ENCODE measurements at regions of chr1 and their contacts with region 1.

Region 1: DNA sequence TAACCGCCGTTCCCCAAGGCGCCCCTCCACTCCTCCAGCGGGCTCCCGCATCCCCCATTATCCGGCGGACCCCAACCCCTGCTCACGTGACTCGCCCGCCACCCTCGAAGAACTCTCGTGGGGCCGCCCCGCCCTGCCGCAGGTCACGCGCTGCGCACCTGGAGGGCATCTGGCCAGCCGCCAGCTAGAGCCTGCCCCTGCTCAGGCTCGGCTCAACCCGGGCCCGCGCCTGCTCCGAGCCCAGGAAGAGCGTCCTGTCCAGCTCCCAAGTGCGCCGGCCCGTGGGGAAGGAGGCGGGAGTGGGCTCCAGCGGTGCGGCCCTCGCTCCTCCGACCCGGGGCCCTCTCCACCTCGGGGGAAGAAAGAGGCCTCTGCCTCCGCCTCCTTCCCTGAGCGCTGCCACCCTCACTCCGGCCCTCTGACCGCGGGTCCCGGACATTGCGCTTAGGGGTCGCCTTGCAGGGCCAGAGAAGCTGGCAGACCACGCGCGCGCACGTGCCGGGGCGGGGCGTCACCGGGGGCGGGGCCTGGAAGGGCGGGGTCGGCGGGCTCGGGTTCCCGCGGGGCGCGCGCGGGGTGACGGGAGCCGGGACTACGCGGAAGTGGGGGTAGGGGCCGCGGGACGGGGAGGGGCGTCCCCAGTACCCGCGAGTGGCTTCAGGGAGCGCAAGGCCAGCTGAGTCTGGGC is 28.4 kb downstream of the HMGN2 start:
- DNase-seq: peak; percentile 85

Region 2: DNA sequence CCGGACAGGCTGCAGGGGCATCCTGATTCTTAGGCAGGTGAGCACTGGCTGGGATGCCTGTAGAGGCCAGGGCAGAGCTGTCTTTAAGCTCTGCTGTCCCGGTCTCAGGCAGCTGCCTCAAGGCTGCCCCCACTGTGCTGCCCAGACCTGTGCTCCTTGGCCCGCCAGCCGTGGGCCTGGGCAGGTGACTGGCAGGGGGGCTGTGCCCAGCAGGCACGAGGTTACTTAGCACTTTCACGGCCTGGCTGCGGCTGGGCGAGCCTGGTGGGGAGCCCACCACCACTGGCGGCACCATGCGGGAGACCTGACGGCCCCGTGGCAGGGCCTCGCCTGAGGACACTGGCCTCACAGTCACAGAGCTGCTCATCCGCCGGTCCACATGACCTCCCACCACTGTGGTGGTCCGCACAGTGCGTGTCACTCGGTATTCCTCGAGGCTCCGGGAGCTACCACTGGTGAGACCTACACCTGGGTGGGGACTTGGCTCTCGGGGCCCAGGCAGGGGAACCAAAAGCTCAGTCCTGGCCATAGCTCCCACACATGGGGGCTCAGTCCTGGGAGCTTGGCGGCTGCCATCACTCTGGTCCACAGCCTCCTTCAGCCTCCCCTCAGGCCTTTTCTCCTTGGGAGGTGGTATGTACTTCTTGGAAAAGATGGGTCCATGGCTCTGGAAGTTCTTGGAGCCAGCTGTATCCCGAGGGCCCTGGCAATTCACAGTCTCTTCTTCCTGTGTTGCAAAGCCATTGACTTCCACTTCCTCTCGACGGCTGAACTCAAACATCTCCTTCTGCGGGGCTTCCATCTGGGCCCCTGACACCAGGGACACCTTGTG is 154.7 kb before region 1 on chr1:
- CTCF ChIA-PET with region 1: no interaction called
- POLR2A ChIA-PET with region 1: no interaction called
- DNase-seq: no peak

Region 3: DNA sequence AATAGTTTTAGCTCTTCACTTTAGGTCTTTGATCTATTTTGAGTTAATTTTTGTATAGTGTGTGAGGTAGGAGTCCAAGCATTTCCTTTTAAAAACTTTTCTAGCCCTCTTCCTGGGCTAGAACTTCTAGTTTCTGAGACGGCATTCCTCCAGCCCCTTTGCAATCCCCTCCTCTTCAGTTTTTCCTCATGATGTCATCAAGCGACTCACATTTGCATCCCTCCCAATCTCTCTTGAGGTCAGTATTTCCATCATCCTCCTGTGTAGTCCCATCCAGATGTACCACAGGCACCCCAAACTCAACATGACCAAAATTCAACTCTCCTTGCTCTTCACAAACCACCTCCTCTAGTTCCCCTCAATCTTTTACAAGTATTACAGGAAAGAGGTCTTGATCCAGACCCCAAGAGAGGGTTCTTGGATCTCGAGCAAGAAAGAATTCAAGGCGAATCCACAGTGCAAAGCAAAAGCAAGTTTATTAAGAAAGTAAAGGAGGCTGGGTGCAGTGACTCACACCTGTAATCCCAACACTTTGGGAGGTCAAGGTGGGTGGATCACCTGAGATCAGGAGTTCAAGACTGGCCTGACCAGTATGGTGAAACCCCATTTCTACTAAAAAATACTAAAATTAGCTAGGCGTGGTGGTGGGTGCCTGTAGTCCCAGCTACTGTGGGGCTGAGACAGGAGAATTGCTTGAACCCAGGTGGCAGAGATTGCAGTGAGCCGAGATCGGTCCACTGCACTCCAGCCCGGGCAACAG is 17.5 kb before region 1 on chr1:
- CTCF ChIA-PET with region 1: interaction called, 6 read pairs
- POLR2A ChIA-PET with region 1: interaction called, 31 read pairs
- DNase-seq: no peak

Region 4: DNA sequence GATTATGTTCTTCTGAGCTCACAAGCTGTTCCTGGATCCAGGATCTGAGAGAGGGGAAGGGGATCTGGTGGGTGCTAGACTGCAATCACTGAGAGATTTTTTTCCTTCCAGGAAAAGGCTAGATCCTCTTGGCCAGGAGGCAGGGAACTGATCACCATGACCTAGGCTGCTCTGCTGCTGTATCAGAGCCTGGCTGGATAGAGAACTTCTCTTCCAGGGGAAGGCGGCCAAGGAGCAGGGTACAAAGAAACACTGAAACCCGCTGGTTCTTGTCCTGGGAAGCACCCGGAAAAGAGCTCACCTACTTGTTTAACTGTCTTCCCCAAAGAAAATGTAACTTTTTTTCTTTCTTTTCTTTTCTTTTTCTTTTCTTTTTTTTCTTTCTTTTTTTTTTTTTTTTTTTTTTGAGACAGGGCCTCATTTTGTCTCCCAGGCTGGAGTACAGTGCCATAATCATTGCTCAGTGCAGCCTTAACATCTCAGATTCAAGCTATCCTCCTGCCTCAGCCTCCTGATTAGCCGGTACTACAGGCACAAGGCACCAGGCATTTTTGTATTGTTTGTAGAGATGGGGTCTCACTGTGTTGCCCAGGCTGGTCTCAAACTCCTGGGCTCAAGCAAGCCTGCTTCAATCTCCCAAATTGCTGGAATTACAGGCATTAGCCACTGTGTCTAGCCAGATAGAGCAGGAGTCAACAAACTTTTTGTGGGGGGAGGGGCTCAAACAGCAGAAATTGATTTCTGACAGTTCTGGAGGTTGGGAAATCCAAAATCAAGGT is 16.5 kb after region 1 on chr1:
- CTCF ChIA-PET with region 1: interaction called, 3 read pairs
- POLR2A ChIA-PET with region 1: interaction called, 32 read pairs
- DNase-seq: no peak

Region 5: GRCh38 chr1:26535201-26535600 is 34.6 kb after region 1 on chr1:
- CTCF ChIA-PET with region 1: interaction called, 8 read pairs
- POLR2A ChIA-PET with region 1: interaction called, 55 read pairs
- DNase-seq: no peak

Measured in HEK293T (cell line).